Spleen (tissue), 13 donors: ENCODE measurements at regions of chr3 and their contacts with region 1.

Region 1: GRCh38 chr3:8416965-8417364 is 84.7 kb upstream of the LMCD1 start:
- DNase-seq: no peak
- H3K4me3 ChIP-seq: peak overlapping the region in 3 of 8 donors; percentile 11 to 37 (median 12)
- H3K27ac ChIP-seq: no peak overlapping the region
- H3K4me1 ChIP-seq: peaks cover 0 to 7% (median 6%) of the 10 kb centered on the region in 6 donors
- H3K27me3 ChIP-seq: no peaks in the 10 kb centered on the region
- CTCF ChIP-seq: no peak
- POLR2A ChIP-seq: no peak

Region 2: GRCh38 chr3:8111069-8111798 is 305.7 kb before region 1 on chr3:
- intact Hi-C with region 1: no loop called
- DNase-seq: no peak
- H3K4me3 ChIP-seq: peak overlapping the region in 2 of 8 donors; percentile 23 to 55
- H3K27ac ChIP-seq: peak overlapping the region in 1 of 8 donors; percentile 21
- H3K4me1 ChIP-seq: peaks cover 0 to 14% (median 6%) of the 10 kb centered on the region in 6 donors
- H3K27me3 ChIP-seq: no peaks in the 10 kb centered on the region
- CTCF ChIP-seq: peak; percentile 59 to 83 (median 73)
- POLR2A ChIP-seq: no peak

Region 3: DNA sequence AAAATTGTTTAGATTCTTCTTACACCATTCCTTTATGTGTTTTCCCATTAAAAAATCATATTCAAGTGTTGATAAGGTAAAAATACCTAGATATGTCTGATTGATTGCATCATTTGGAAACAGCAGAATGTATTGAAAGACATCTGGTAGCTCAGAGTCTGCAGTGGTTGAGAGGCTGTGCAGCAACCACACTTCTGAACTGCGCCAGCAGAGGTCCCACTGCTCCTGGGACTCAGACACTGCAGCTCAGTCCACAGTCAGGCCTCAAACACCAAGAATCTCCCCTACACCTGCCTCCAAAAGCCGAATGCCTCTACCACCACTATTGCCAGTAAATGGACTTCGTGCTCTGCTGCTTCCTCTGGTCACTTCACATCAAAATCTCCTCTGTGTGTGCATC is 92.2 kb before region 1 on chr3:
- intact Hi-C with region 1: loop called (anchors 10 kb)
- DNase-seq: peak; percentile 74
- H3K4me3 ChIP-seq: no peak overlapping the region
- H3K27ac ChIP-seq: no peak overlapping the region
- H3K4me1 ChIP-seq: peaks cover 0 to 3% (median 0%) of the 10 kb centered on the region in 6 donors
- H3K27me3 ChIP-seq: no peaks in the 10 kb centered on the region
- CTCF ChIP-seq: peak in 9 of 11 experiments; percentile 11 to 65 (median 40)
- POLR2A ChIP-seq: no peak